ENCODE measurements at regions of chr11 and their contacts with region 1.

Region 1: DNA sequence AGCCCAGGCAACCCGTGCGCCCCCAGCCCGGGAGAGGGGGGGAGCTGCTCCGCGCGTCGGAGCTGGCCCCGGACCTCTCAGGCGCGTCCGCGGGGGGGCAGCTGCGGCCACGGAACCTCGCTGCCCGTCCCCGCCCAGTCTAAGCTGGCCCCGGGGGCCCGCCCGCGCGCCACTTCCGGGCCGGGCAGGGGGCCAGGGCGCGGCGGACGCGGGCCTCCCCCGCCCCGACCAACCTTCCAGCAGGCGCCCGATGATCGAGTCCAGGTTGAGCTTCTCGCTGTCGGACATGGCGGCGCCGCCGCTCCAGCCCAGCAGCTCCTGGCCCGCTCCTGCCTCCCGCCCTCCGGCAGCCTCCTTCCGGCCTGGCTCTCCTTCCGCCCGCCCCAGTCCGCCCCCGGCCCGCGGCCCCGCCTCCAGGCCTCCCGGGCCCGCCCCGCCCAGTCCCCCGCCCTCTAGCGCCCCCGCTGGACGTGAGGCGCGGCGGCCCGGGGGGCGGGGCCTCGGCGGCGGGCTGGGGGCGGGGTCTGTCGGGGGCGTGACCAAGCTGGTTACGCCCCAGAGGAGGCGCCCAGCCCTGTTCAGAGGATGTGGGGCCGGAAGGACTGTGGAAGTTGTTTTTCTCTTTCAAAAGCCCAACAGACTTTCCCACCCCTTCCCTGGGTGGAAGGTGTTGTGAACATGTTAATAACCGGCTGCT is at the start of gene PPP1CA:
- DNase-seq: peak; percentile 80 to 90 (median 86)
- H3K4me3 ChIP-seq: peak within 1 kb of the TSS; percentile 70 to 82 (median 79)
- H3K4me3 Mint-ChIP-seq: peak within 1 kb of the TSS; percentile 78 to 87
- H3K27ac ChIP-seq: peak within 1 kb of the TSS; percentile 65 to 83
- H3K27ac Mint-ChIP-seq: peak within 1 kb of the TSS; percentile 73 to 92 (median 90)
- H3K4me1 ChIP-seq: peaks cover 69 to 90% of the 10 kb centered on the region in 2 donors
- H3K4me1 Mint-ChIP-seq: peaks cover 78% of the 10 kb centered on the region
- H3K27me3 ChIP-seq: no peaks in the 10 kb centered on the region
- H3K27me3 Mint-ChIP-seq: no peaks in the 10 kb centered on the region
- CTCF ChIP-seq: peak; percentile 69
- polyA plus RNA-seq, gene PPP1CA: 209 to 551 (median 461) TPM

Region 2: DNA sequence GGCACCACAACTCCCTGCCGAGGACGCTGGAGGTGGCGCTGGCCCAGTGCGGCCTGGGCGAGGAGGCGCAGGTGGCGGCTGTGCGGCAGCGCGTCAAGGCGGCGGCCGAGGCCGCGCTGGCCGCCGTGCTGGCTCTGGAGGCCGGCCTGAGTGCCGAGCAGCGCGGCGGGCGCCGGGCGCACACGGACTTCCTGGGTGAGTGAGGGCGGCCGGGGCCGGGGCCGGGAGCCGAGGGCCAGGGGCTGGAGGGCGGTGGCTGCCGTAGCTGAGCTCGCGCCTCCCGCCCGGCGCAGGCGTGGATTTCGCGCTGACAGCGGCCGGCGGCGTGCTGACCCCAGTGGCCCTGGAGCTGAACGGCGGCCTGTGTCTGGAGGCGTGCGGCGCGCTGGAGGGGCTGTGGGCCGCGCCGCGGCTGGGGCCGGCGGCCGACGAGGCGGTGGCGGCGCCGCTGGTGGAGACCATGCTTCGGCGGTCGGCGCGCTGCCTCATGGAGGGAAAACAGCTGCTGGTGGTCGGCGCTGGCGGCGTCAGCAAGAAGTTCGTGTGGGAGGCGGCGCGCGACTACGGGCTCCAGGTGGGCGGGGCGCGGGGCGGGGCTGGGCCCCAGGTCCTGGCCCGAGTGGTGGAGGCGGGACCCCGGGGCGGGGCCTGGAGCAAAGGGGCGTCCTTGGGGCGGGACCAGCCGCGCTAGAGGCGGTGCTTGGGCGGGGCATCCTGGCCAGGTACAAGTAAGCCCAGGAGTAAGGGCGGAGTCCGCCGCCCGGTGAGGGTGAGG is 19.2 kb after region 1 on chr11:
- intact Hi-C with region 1: loop called in 1 of 2 experiments (anchors 1 kb)
- DNase-seq: peak; percentile 82 to 85 (median 84)
- H3K4me3 ChIP-seq: peak overlapping the region; percentile 7 to 76 (median 24)
- H3K4me3 Mint-ChIP-seq: peak overlapping the region; percentile 72 to 82
- H3K27ac ChIP-seq: peak overlapping the region in 1 of 2 donors; percentile 41
- H3K27ac Mint-ChIP-seq: peak overlapping the region in 1 of 7 donors; percentile 35
- H3K4me1 ChIP-seq: peaks cover 29 to 47% of the 10 kb centered on the region in 2 donors
- H3K4me1 Mint-ChIP-seq: peaks cover 32% of the 10 kb centered on the region
- H3K27me3 ChIP-seq: peaks cover 0 to 44% of the 10 kb centered on the region in 2 donors
- H3K27me3 Mint-ChIP-seq: peaks cover 28 to 46% (median 39%) of the 10 kb centered on the region in 3 donors
- CTCF ChIP-seq: no peak

Region 3: DNA sequence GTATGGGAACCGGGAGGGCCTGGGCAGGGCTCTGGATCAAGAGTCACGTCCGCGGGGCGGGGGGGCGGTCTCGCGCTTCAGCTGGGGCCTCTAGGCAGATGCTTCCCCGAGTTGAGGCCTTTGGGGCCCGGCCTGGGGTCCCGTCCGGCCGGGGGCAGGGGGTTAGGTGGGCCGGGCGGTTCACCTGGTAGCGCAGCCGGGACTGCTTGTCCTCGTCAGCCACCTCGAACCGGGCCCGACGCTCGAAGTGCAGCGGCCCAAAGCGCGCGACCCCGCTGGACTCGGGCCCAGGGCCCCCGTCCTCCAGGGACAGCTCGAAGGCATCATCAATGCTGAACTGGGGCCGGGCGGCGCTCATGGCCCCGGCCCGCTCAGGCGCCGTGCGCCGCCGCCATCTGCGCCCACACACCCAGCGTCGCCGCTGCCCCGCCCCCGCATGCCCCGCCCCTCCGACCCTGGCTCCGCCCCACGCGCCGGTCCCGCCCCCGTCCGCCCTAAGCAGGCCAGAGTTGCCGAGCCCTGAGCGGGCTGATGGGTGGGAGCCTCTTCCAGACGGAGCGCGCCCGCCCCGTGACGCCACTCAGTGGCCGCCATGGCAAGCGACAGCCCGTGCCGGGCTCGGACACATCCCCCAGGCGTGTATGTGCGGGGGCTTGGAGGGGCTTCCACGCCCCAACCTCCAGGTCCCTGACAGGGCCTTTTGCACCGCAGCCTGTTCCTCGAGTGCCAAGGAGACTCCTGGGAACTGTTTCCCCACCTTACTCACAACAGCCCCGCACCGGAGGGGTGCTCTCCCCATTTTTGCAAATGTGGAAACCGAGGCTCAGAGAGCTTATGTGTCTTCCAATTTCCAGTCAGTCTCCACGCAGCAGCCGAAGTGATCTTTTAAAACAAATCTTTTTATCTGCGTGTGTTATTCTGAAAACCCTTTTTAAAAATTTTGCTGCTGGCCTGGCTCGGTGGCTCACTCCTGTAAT is 67.5 kb after region 1 on chr11 and contains the start of gene TMEM134:
- intact Hi-C with region 1: loop called (anchors 2 to 5 kb)
- DNase-seq: peak; percentile 89 to 90 (median 90)
- H3K4me3 ChIP-seq: peak within 1 kb of the TSS; percentile 63 to 88 (median 66)
- H3K4me3 Mint-ChIP-seq: peak within 1 kb of the TSS; percentile 79 to 92
- H3K27ac ChIP-seq: peak within 1 kb of the TSS; percentile 41 to 90
- H3K27ac Mint-ChIP-seq: peak within 1 kb of the TSS in 5 of 7 donors; percentile 75 to 85 (median 79)
- H3K4me1 ChIP-seq: peaks cover 24 to 42% of the 10 kb centered on the region in 2 donors
- H3K4me1 Mint-ChIP-seq: peaks cover 27% of the 10 kb centered on the region
- H3K27me3 ChIP-seq: no peaks in the 10 kb centered on the region
- H3K27me3 Mint-ChIP-seq: peaks cover 0 to 12% (median 5%) of the 10 kb centered on the region in 3 donors
- CTCF ChIP-seq: peak; percentile 59
- polyA plus RNA-seq, gene TMEM134: 67.4 to 104 (median 76.8) TPM